Panc1 (cell line): ENCODE measurements at regions of chr13 and their contacts with region 1.

Region 1: GRCh38 chr13:25114220-25114619 is 18.3 kb downstream of the PABPC3 start:
- DNase-seq: peak; percentile 45
- ATAC-seq: peak; percentile 89
- H3K4me3 ChIP-seq: no peak overlapping the region
- H3K27ac ChIP-seq: no peak overlapping the region
- H3K4me1 ChIP-seq: no peaks in the 10 kb centered on the region
- H3K27me3 ChIP-seq: no peaks in the 10 kb centered on the region
- CTCF ChIP-seq: peak; percentile 89

Region 2: GRCh38 chr13:24995226-24995804 is 118.9 kb before region 1 on chr13:
- CTCF ChIA-PET with region 1: interaction called, 14 read pairs
- POLR2A ChIA-PET with region 1: no interaction called
- in situ Hi-C with region 1: no loop called
- intact Hi-C with region 1: no loop called
- DNase-seq: no peak
- ATAC-seq: peak; percentile 93
- H3K4me3 ChIP-seq: no peak overlapping the region
- H3K27ac ChIP-seq: no peak overlapping the region
- H3K4me1 ChIP-seq: no peaks in the 10 kb centered on the region
- H3K27me3 ChIP-seq: no peaks in the 10 kb centered on the region; the same call in 1 of the 2 replicates
- CTCF ChIP-seq: peak; percentile 75

Region 3: DNA sequence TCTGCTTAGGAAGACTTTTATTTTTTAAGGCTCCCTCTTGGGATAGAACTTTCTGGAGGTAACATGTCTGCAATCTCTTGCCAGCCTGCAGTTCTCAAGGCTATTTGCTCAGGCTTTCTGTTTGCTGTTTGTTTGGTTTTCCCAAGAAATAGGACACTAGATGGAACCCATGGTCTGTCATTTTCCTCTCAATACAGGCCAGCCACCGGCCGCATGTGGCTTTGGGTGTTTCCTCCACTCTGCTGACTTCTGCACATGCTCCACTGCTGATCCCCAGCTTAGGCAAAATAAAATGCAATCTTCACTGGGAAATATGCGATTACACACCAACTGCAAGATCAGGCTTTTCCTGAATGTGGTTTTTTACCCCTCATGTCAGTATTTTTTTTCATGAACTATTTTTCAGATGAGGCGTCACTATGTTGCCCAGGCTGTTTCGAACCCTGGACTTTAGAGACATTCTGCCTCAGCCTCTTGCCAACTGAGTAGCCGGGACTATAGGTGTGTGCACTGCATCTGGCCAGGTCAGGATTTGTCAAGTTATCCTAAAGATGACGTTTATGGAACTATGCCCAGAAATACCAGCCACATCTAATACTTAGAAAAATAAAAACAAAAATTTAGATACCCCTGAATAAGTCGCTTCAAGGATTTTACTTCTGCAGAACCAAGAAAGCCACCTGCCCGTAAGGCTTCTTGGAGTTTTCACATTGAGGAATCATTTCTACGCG is 112.6 kb before region 1 on chr13:
- CTCF ChIA-PET with region 1: interaction called, 3 read pairs
- POLR2A ChIA-PET with region 1: no interaction called
- in situ Hi-C with region 1: no loop called
- intact Hi-C with region 1: loop called (anchors 5 kb)
- DNase-seq: no peak
- ATAC-seq: no peak
- H3K4me3 ChIP-seq: no peak overlapping the region
- H3K27ac ChIP-seq: no peak overlapping the region
- H3K4me1 ChIP-seq: peaks cover 8% of the 10 kb centered on the region
- H3K27me3 ChIP-seq: no peaks in the 10 kb centered on the region
- CTCF ChIP-seq: no peak

Region 4: DNA sequence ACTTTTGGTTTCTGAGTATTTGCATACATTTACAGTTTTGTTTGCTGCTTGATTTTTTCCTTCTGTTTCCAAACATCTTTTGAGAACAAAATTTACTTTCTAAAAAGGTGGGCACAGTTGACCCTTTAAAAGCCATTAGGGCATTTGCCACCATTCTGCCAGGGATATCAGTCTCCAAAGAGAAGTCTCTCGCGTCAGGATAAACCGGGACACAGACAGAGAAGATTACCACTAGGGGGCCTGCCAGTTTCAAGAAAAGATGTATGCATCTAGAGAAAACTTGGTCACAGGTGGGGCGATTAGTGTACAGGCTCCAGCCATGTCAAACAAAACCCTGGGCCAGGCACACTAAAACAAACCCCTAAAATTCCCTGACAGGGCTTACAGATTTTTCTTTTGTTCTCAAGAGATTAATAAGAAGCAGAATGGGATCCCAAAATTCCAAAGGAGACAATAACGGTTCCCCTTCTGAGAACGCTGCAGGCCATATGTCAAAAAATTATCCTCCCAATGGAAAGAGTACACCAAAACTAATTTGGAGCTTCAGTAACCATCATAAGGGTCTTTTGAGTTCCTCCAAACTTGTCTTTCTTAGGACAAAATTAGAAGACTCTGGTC is 29.0 kb before region 1 on chr13:
- CTCF ChIA-PET with region 1: interaction called, 6 read pairs
- POLR2A ChIA-PET with region 1: no interaction called
- in situ Hi-C with region 1: no loop called
- intact Hi-C with region 1: loop called (anchors 1 kb)
- DNase-seq: peak; percentile 2
- ATAC-seq: peak; percentile 82
- H3K4me3 ChIP-seq: no peak overlapping the region
- H3K27ac ChIP-seq: no peak overlapping the region
- H3K4me1 ChIP-seq: no peaks in the 10 kb centered on the region
- H3K27me3 ChIP-seq: no peaks in the 10 kb centered on the region
- CTCF ChIP-seq: peak; percentile 79

Region 5: GRCh38 chr13:25335856-25336255 is 221.6 kb after region 1 on chr13:
- CTCF ChIA-PET with region 1: no interaction called
- POLR2A ChIA-PET with region 1: no interaction called
- in situ Hi-C with region 1: no loop called
- intact Hi-C with region 1: no loop called
- DNase-seq: no peak
- ATAC-seq: no peak
- H3K4me3 ChIP-seq: no peak overlapping the region
- H3K27ac ChIP-seq: no peak overlapping the region
- H3K4me1 ChIP-seq: no peaks in the 10 kb centered on the region
- H3K27me3 ChIP-seq: no peaks in the 10 kb centered on the region
- CTCF ChIP-seq: no peak